Breast epithelium (tissue), 4 donors: ENCODE measurements at regions of chr13 and their contacts with region 1.

Region 1: DNA sequence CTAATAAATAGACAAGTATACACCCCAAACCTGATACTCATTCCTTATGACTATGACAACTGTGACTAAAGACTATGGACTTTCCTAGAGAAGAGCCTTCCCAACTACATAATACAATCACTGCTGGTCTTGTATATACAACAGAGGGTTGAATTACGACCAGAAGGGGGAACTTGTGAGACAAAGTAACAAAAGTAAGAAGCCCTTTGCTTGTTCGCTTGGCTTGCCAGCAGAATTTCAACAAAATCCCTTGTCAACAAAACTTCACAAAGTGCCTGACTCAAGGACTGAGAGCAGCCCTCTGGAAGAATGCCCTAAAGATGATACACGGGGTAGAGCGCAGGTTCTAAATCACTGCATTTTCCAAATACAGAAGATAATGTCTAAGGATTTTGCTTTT is 99.4 kb downstream of the WASF3 start:
- DNase-seq: no peak
- H3K4me3 ChIP-seq: no peak overlapping the region
- H3K27ac ChIP-seq: no peak overlapping the region
- H3K4me1 ChIP-seq: no peaks in the 10 kb centered on the region
- H3K27me3 ChIP-seq: no peaks in the 10 kb centered on the region
- CTCF ChIP-seq: no peak
- POLR2A ChIP-seq: no peak

Region 2: GRCh38 chr13:26646603-26647002 is 10.3 kb before region 1 on chr13:
- intact Hi-C with region 1: loop called (anchors 2 kb)
- DNase-seq: no peak
- H3K4me3 ChIP-seq: no peak overlapping the region
- H3K27ac ChIP-seq: no peak overlapping the region
- H3K4me1 ChIP-seq: no peaks in the 10 kb centered on the region
- H3K27me3 ChIP-seq: no peaks in the 10 kb centered on the region
- CTCF ChIP-seq: no peak
- POLR2A ChIP-seq: no peak

Region 3: GRCh38 chr13:26785838-26786630 is 129.1 kb after region 1 on chr13:
- intact Hi-C with region 1: loop called (anchors 5 kb)
- DNase-seq: no peak
- H3K4me3 ChIP-seq: peak overlapping the region in 2 of 3 donors; percentile 21 to 45
- H3K27ac ChIP-seq: no peak overlapping the region
- H3K4me1 ChIP-seq: no peaks in the 10 kb centered on the region
- H3K27me3 ChIP-seq: peaks cover 0 to 5% of the 10 kb centered on the region in 2 donors
- CTCF ChIP-seq: no peak
- POLR2A ChIP-seq: no peak